Endothelial cell of umbilical vein (primary cell): ENCODE measurements at regions of chr1 and their contacts with region 1.

Region 1: DNA sequence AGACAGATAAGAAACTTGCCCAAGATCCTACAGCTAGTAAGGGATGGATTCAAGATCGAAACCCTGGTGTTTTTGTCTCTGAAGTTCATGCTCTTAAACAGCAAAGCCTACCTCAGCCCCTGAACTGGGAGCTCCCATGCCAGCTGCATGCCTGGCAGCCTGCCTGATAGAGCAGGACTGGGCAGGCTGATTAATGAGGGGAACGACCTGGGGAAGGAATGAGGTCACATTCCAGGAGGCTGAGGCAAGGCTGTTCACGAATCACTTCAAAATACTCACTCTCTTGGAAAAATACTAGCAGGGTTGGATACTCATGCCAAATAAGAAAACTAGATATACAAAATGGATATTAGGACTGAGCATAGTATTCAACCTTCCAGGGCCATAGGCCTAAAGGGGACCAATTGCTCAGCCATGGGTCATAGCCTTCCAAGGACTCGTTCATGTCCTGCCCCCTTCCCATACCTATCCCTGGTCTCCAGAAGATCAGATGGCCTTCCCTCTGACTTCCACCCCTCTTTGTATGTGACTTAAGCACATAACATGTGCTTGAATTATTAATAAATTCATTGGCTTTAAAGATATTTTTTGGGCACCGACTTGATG is 15.6 kb upstream of the TACSTD2 start:
- DNase-seq: peak; percentile 98
- H3K4me3 ChIP-seq: no peak overlapping the region
- H3K27ac ChIP-seq: peak overlapping the region; percentile 91
- H3K4me1 ChIP-seq: peaks cover 22% of the 10 kb centered on the region
- H3K27me3 ChIP-seq: no peaks in the 10 kb centered on the region
- CTCF ChIP-seq: no peak
- POLR2A ChIP-seq: peak; percentile 79

Region 2: GRCh38 chr1:58570094-58570493 is 22.5 kb before region 1 on chr1:
- CTCF ChIA-PET with region 1: no interaction called
- POLR2A ChIA-PET with region 1: no interaction called
- dilution Hi-C with region 1: no loop called
- intact Hi-C with region 1: no loop called
- DNase-seq: no peak
- H3K4me3 ChIP-seq: no peak overlapping the region
- H3K27ac ChIP-seq: no peak overlapping the region
- H3K4me1 ChIP-seq: peaks cover 12% of the 10 kb centered on the region
- H3K27me3 ChIP-seq: no peaks in the 10 kb centered on the region
- CTCF ChIP-seq: no peak
- POLR2A ChIP-seq: no peak

Region 3: DNA sequence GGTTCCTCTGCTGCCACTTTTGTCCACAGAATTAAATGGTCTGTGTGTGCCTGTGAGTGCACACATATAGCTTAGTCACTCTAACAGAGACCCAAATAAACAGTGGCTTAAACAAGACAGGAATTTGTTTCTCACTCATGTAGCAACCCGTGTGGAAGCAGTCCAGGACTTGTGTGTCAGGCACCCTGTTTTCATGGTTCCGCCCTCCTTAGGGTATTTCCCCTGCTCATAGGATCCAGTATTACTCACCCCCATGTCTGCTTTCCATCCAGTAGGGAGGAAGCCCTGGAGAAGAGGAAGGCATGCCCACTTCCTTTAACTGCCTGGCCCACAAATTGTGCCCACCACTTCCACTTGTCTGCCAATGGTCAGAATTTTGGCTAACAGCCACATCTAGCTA is 25.7 kb after region 1 on chr1:
- CTCF ChIA-PET with region 1: interaction called, 6 read pairs
- POLR2A ChIA-PET with region 1: interaction called, 6 read pairs
- dilution Hi-C with region 1: no loop called
- intact Hi-C with region 1: loop called (anchors 1 kb)
- DNase-seq: peak; percentile 96
- H3K4me3 ChIP-seq: no peak overlapping the region
- H3K27ac ChIP-seq: peak overlapping the region; percentile 77
- H3K4me1 ChIP-seq: peaks cover 32% of the 10 kb centered on the region
- H3K27me3 ChIP-seq: no peaks in the 10 kb centered on the region
- CTCF ChIP-seq: no peak
- POLR2A ChIP-seq: no peak